ENCODE measurements at regions of chr1 and their contacts with region 1.

Region 1: GRCh38 chr1:21782868-21783678 is at the start of gene USP48:
- DNase-seq: peak; percentile 98
- ATAC-seq: peak; percentile 81
- H3K4me3 ChIP-seq: peak within 1 kb of the TSS; percentile 86 to 100 (median 94)
- H3K4me3 Mint-ChIP-seq: peak within 1 kb of the TSS; percentile 95
- H3K27ac ChIP-seq: peak within 1 kb of the TSS; percentile 99 to 100
- H3K27ac Mint-ChIP-seq: peak within 1 kb of the TSS; percentile 100
- H3K4me1 ChIP-seq: peaks cover 23 to 43% of the 10 kb centered on the region in 2 donors
- H3K4me1 Mint-ChIP-seq: peaks cover 34% of the 10 kb centered on the region
- H3K27me3 ChIP-seq: no peaks in the 10 kb centered on the region
- H3K27me3 Mint-ChIP-seq: no peaks in the 10 kb centered on the region
- CTCF ChIP-seq: peak; percentile 4
- total RNA-seq, gene USP48: 135 and 142 TPM in 2 replicates

Region 2: DNA sequence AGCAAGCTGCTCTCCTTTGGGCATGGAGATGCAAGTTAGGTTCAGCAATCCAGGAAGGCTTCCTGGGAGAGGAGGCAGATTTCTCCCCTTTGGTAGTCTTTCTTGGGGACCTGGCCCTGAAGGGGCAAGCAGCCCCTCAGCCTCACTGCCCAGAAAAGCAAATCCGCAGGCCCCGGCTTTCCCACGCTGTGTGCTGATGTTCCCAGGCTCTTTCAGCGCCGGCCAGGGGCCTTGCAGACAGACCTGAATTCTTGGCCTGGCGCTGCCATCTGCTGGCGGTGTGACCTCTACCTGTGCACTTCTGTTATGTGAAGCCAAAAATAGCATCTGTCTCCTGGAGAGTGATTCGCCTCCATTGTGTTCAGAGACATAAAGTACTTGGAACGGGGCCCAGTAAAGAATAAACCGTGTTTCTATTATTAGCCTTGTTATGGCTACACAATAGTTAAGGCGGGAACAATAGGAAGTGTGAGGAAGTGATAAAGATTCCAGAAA is 209.1 kb before region 1 on chr1:
- CTCF ChIA-PET with region 1: no interaction called
- POLR2A ChIA-PET with region 1: no interaction called
- intact Hi-C with region 1: no loop called
- DNase-seq: peak; percentile 46
- ATAC-seq: no peak
- H3K4me3 ChIP-seq: no peak overlapping the region
- H3K4me3 Mint-ChIP-seq: no peak overlapping the region
- H3K27ac ChIP-seq: no peak overlapping the region
- H3K27ac Mint-ChIP-seq: no peak overlapping the region
- H3K4me1 ChIP-seq: no peaks in the 10 kb centered on the region
- H3K4me1 Mint-ChIP-seq: peaks cover 1% of the 10 kb centered on the region
- H3K27me3 ChIP-seq: peaks cover 0 to 20% (median 6%) of the 10 kb centered on the region in 4 experiments
- H3K27me3 Mint-ChIP-seq: peaks cover 9% of the 10 kb centered on the region
- CTCF ChIP-seq: peak; percentile 14

Region 3: GRCh38 chr1:21659099-21659923 is 123.8 kb before region 1 on chr1:
- CTCF ChIA-PET with region 1: interaction called, 5 read pairs
- POLR2A ChIA-PET with region 1: no interaction called
- intact Hi-C with region 1: loop called (anchors 2 kb)
- DNase-seq: peak; percentile 85
- ATAC-seq: peak; percentile 92
- H3K4me3 ChIP-seq: no peak overlapping the region
- H3K4me3 Mint-ChIP-seq: peak overlapping the region; percentile 39
- H3K27ac ChIP-seq: no peak overlapping the region
- H3K27ac Mint-ChIP-seq: no peak overlapping the region
- H3K4me1 ChIP-seq: peaks cover 11% of the 10 kb centered on the region in 2 donors
- H3K4me1 Mint-ChIP-seq: peaks cover 10% of the 10 kb centered on the region
- H3K27me3 ChIP-seq: peaks cover 0 to 46% (median 14%) of the 10 kb centered on the region in 4 experiments
- H3K27me3 Mint-ChIP-seq: peaks cover 37% of the 10 kb centered on the region
- CTCF ChIP-seq: peak; percentile 91

Region 4: GRCh38 chr1:21762022-21762404 is 21.1 kb before region 1 on chr1:
- CTCF ChIA-PET with region 1: interaction called, 25 read pairs
- POLR2A ChIA-PET with region 1: interaction called, 12 read pairs
- intact Hi-C with region 1: loop called (anchors 1 kb)
- DNase-seq: peak; percentile 68
- ATAC-seq: peak; percentile 80
- H3K4me3 ChIP-seq: peak overlapping the region in 1 of 5 experiments; percentile 12
- H3K4me3 Mint-ChIP-seq: peak overlapping the region; percentile 69
- H3K27ac ChIP-seq: peak overlapping the region; percentile 72 to 74
- H3K27ac Mint-ChIP-seq: peak overlapping the region; percentile 85
- H3K4me1 ChIP-seq: peaks cover 40 to 57% of the 10 kb centered on the region in 2 donors
- H3K4me1 Mint-ChIP-seq: peaks cover 75% of the 10 kb centered on the region
- H3K27me3 ChIP-seq: no peaks in the 10 kb centered on the region
- H3K27me3 Mint-ChIP-seq: no peaks in the 10 kb centered on the region
- CTCF ChIP-seq: no peak

Region 5: GRCh38 chr1:21869620-21870121 is 86.6 kb after region 1 on chr1:
- CTCF ChIA-PET with region 1: no interaction called
- POLR2A ChIA-PET with region 1: no interaction called
- intact Hi-C with region 1: loop called (anchors 5 kb)
- DNase-seq: no peak
- ATAC-seq: no peak
- H3K4me3 ChIP-seq: no peak overlapping the region
- H3K4me3 Mint-ChIP-seq: no peak overlapping the region
- H3K27ac ChIP-seq: no peak overlapping the region
- H3K27ac Mint-ChIP-seq: no peak overlapping the region
- H3K4me1 ChIP-seq: peaks cover 16 to 27% of the 10 kb centered on the region in 2 donors
- H3K4me1 Mint-ChIP-seq: peaks cover 22% of the 10 kb centered on the region
- H3K27me3 ChIP-seq: no peaks in the 10 kb centered on the region
- H3K27me3 Mint-ChIP-seq: no peaks in the 10 kb centered on the region
- CTCF ChIP-seq: no peak

Region 6: DNA sequence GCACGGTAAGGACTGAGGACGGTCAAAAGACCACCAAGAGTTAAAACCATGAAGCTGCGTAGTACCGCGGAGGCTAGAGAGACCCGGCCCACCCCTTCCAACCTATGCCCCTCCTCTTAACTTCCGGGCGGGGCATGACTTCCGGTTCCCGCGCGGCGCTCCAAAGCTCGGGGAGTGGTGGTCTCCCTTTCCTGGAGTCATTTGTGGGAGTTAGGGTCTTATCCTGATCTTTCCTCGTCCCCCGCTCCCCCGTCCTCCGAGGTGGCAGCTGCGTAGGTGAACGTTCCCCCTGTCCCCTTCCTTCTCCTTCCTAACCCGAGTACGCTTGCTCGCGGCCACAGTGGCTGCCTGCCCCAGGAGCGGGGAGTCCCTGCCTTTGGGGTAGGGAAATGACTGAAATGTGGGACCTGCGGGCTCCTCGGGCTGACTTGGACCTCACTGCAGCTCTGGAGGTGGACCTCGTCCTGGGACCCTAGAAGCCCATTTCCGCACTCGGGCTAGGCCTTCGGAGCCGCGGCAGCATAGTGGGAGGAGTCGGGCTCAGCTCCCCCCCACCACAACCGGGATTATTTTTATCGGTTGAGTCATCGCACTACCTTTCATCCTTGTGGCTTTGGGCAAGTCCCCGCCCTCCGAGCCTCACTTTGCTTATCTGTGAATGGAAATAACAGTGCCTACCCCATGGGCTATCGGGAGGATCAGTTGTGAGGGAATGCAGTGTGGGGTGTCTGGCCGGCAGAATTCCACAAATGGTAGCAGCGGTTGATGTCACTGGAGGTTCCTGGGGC is 242.5 kb after region 1 on chr1:
- CTCF ChIA-PET with region 1: interaction called, 4 read pairs
- POLR2A ChIA-PET with region 1: interaction called, 15 read pairs
- intact Hi-C with region 1: loop called (anchors 2 kb)
- DNase-seq: peak; percentile 93
- ATAC-seq: peak; percentile 76
- H3K4me3 ChIP-seq: peak overlapping the region; percentile 85 to 99 (median 94)
- H3K4me3 Mint-ChIP-seq: peak overlapping the region; percentile 96
- H3K27ac ChIP-seq: peak overlapping the region; percentile 98
- H3K27ac Mint-ChIP-seq: peak overlapping the region; percentile 98
- H3K4me1 ChIP-seq: peaks cover 17 to 38% of the 10 kb centered on the region in 2 donors
- H3K4me1 Mint-ChIP-seq: peaks cover 43% of the 10 kb centered on the region
- H3K27me3 ChIP-seq: no peaks in the 10 kb centered on the region
- H3K27me3 Mint-ChIP-seq: no peaks in the 10 kb centered on the region
- CTCF ChIP-seq: no peak

Region 7: DNA sequence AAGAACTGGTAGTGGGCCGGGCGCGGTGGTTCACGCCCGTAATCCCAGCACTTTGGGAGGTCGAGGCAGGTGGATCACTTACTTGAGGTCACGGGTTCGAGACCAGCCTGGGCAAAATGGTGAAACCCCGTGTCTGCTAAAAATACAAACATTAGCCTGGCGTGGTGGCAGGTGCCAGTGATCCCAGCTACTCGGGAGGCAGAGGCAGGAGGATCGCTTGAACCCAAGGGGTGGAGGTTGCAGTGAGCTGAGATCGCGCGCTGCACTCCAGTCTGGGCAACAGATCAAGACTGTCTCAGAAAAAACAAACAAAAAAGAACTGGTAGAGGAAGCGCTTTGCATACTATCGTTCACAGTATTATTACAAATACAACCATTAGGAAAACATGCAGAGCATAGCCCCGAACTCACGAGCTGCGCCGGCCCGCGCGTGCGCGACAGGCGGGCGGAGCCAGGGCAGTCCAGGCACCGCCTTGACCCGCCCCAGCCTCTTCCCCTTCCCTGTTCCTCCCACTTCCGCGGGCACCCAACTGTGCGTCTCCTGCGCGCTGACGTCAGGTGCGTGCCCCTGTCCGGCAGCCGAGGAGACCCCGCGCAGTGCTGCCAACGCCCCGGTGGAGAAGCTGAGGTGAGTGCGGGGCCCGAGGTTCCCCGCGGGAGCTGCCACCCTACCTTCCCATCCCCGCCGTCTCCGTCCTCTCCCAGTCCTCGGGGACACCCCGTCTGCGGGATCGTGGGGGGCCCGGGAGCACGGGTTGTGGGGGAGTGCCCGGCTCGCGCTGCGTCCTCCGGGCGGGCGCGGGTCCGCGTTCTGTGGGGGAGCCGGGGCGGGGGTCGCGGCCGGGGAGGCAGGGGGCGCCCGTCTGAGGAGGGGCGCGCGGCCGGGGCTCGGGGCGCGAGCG is 269.3 kb after region 1 on chr1 and contains the start of gene CDC42:
- CTCF ChIA-PET with region 1: no interaction called
- POLR2A ChIA-PET with region 1: interaction called, 6 read pairs
- intact Hi-C with region 1: loop called (anchors 1 kb)
- DNase-seq: peak; percentile 97
- ATAC-seq: peak; percentile 90
- H3K4me3 ChIP-seq: peak within 1 kb of the TSS; percentile 66 to 89 (median 79)
- H3K4me3 Mint-ChIP-seq: peak within 1 kb of the TSS; percentile 98
- H3K27ac ChIP-seq: peak within 1 kb of the TSS; percentile 96 to 98
- H3K27ac Mint-ChIP-seq: peak within 1 kb of the TSS; percentile 98
- H3K4me1 ChIP-seq: peaks cover 37 to 47% of the 10 kb centered on the region in 2 donors
- H3K4me1 Mint-ChIP-seq: peaks cover 45% of the 10 kb centered on the region
- H3K27me3 ChIP-seq: no peaks in the 10 kb centered on the region
- H3K27me3 Mint-ChIP-seq: no peaks in the 10 kb centered on the region
- CTCF ChIP-seq: no peak
- total RNA-seq, gene CDC42: 202 and 209 TPM in 2 replicates

Measured in B cell (primary cell).